ENCODE measurements at regions of chr3 and their contacts with region 1.

Region 1: GRCh38 chr3:23324745-23325144 is 121.6 kb downstream of the UBE2E2 start:
- DNase-seq: peak; percentile 73
- H3K4me3 ChIP-seq: peak overlapping the region; percentile 49
- H3K27ac ChIP-seq: peak overlapping the region; percentile 80
- H3K4me1 ChIP-seq: peaks cover 43% of the 10 kb centered on the region
- CTCF ChIP-seq: no peak

Region 2: GRCh38 chr3:23219117-23219516 is 105.6 kb before region 1 on chr3:
- CTCF ChIA-PET with region 1: no interaction called
- POLR2A ChIA-PET with region 1: interaction called, 5 read pairs
- intact Hi-C with region 1: loop called (anchors 5 kb)
- DNase-seq: no peak
- H3K4me3 ChIP-seq: peak overlapping the region; percentile 3
- H3K27ac ChIP-seq: peak overlapping the region; percentile 16
- H3K4me1 ChIP-seq: peaks cover 49% of the 10 kb centered on the region
- CTCF ChIP-seq: no peak

Region 3: DNA sequence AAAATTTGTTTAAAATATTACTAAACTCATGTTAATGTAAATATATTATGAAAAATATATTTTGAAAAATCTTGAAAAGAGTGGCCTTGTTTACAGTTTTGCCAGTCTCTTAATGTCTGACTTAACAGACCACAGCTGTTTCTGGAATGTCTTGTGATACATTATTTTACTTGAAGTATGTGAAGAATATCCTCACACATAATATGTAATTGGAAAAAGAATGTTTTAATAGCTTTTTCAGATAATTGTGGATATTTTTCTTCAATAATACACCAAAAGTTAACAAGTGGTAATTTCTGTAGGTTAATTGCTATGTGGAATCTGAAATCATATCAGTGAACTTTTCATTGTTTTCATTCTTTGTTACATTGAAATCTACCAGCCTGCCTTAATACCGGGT is 20.3 kb before region 1 on chr3:
- CTCF ChIA-PET with region 1: no interaction called
- POLR2A ChIA-PET with region 1: interaction called, 12 read pairs
- intact Hi-C with region 1: no loop called
- DNase-seq: no peak
- H3K4me3 ChIP-seq: no peak overlapping the region
- H3K27ac ChIP-seq: no peak overlapping the region
- H3K4me1 ChIP-seq: peaks cover 8% of the 10 kb centered on the region
- CTCF ChIP-seq: no peak

Region 4: DNA sequence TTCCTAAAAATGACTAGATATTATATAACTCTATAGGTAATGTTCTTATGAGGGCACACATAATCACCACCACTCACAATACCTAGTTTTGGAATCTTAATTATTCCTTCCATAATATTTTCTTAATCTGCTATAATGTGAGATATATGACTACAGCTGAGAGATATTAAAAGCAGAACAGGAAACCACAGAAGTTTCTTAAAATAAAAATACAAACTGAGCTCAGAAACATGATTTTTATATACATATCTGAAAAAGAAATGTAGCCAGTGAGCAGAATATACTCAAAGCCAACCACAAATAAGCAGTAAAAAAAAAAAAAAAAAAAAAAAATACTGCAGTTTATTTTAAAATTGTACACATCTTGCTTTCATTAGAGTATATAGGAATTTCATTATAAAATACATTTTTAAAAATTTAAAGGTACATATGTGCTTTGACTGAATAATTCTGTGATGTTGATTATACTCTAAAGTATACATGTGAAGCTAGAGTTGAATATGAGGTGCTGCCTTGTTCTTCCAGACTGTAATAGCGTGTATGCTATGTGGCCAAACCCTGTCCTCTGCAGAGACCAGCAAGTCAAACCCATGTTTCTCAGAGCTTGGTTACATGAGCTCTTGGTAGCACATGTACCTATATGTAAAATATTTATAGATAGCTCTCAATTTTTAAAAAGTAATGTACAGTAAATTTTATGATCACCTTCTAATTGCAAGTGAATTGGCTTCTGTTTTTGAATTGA is 53.4 kb after region 1 on chr3:
- CTCF ChIA-PET with region 1: interaction called, 4 read pairs
- POLR2A ChIA-PET with region 1: interaction called, 10 read pairs
- intact Hi-C with region 1: no loop called
- DNase-seq: peak; percentile 60
- H3K4me3 ChIP-seq: peak overlapping the region; percentile 46
- H3K27ac ChIP-seq: peak overlapping the region; percentile 79
- H3K4me1 ChIP-seq: peaks cover 72% of the 10 kb centered on the region
- CTCF ChIP-seq: no peak